ENCODE measurements at regions of chr12 and their contacts with region 1.

Region 1: GRCh38 chr12:5003020-5003666 is 40.5 kb upstream of the KCNA5 start:
- DNase-seq: peak in 2 of 3 donors; percentile 76
- ATAC-seq: peak; percentile 90
- H3K4me3 ChIP-seq: no peak overlapping the region
- H3K4me1 ChIP-seq: no peaks in the 10 kb centered on the region
- CTCF ChIP-seq: peak; percentile 77

Region 2: GRCh38 chr12:4849795-4850345 is 153.3 kb before region 1 on chr12:
- intact Hi-C with region 1: loop called (anchors 5 kb)
- DNase-seq: no peak
- ATAC-seq: no peak
- H3K4me3 ChIP-seq: no peak overlapping the region
- H3K4me1 ChIP-seq: no peaks in the 10 kb centered on the region
- CTCF ChIP-seq: no peak

Region 3: GRCh38 chr12:4857472-4858291 is 145.5 kb before region 1 on chr12:
- intact Hi-C with region 1: loop called (anchors 5 kb)
- DNase-seq: peak in 2 of 3 donors; percentile 79 to 90
- ATAC-seq: peak; percentile 82
- H3K4me3 ChIP-seq: no peak overlapping the region
- H3K4me1 ChIP-seq: peaks cover 6% of the 10 kb centered on the region
- CTCF ChIP-seq: peak; percentile 76